Panc1 (cell line): ENCODE measurements at regions of chr10 and their contacts with region 1.

Region 1: DNA sequence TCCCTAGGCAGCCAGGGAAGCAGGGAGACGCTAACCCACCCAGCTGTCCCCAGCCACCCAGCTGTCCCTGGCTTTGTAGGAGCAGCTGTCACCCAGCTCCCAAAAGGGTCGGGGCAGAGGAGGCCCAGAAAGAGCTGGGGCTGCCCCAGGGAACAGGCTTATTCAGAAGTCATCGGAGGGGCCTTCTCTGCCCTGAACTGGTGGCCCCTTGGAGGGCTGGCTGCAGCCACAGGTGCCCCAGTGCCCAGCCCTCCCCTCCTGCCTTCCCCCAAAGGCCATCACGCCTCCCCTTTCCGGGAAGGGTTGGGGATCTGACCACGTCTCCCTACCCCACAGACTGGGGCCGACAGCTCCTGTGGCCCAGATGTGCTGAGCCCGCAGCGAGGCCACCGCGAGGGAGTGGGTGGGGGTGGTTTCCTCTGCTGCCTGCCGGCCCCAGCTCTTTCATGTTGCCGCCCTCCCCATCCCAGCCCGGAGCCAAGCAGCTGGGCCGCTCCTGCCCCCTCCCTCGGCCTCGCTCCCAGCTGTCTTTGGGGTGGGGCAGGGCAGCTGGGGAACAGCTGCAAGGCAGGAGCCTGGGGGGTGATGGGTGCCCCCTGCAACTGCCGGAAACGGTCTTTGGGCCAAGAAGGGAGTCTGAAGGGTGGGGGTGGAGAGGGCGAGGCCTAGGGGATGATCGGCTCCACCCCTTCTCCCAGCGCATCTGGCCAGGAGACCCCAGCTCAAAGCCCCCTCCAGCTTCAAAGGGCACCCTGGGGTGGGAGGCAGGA is 16.8 kb downstream of the TRIM8 start:
- DNase-seq: no peak
- ATAC-seq: peak; percentile 63
- H3K4me3 ChIP-seq: no peak overlapping the region
- H3K27ac ChIP-seq: no peak overlapping the region
- H3K4me1 ChIP-seq: peaks cover 16% of the 10 kb centered on the region
- H3K27me3 ChIP-seq: no peaks in the 10 kb centered on the region
- CTCF ChIP-seq: no peak

Region 2: DNA sequence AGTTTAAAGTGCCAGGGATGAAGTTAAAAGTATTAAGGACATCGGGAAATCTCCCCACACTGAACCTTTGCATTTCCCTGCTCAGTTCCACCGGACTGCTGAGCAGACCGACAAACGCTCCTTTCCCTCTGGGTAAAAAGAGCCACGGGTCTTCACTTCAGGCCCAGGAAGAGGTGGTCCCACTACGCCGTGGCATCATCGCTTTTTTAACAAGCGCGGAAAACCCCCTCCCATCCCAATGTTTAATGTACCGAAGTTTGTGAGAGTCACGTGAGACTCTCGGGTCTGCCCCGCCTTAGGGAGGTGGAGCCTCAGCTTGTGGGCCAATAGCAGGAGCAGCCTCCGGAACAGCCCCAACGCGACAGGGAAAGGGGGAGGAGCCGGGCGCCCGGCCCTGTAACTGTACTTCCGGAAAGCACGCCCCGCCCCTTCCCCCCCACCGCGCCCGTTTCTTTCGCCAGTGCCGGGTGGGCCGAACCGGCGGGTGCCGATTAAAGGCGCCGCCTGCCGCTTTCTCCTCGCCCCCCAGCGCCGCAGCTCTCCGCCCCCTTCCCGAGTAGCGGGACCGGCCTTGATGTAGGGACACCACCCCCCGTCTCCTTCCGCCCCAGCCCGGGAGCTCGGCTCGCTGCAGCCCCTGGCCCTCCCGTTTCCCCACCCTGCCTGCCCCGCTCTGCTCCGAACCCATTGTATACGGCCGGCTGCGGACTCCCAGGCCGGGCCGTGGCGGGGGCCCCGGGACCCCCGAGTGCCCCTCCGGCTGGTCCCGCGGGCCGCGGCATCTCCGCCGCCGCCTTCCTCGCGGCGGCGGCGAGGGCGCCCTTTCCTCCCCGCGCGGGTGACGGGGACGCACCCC is 19.0 kb before region 1 on chr10:
- CTCF ChIA-PET with region 1: interaction called, 4 read pairs
- POLR2A ChIA-PET with region 1: interaction called, 11 read pairs
- in situ Hi-C with region 1: no loop called
- intact Hi-C with region 1: no loop called
- DNase-seq: peak; percentile 87
- ATAC-seq: peak; percentile 79
- H3K4me3 ChIP-seq: peak overlapping the region; percentile 69 to 86
- H3K27ac ChIP-seq: peak overlapping the region; percentile 94
- H3K4me1 ChIP-seq: peaks cover 21% of the 10 kb centered on the region
- H3K27me3 ChIP-seq: no peaks in the 10 kb centered on the region
- CTCF ChIP-seq: no peak; the same call in 1 of the 2 replicates

Region 3: GRCh38 chr10:102713814-102714620 is 52.9 kb after region 1 on chr10 and contains the start of gene ARL3:
- CTCF ChIA-PET with region 1: no interaction called
- POLR2A ChIA-PET with region 1: interaction called, 13 read pairs
- in situ Hi-C with region 1: no loop called
- intact Hi-C with region 1: no loop called
- DNase-seq: peak; percentile 85
- ATAC-seq: peak; percentile 96
- H3K4me3 ChIP-seq: peak within 1 kb of the TSS; percentile 68 to 82
- H3K27ac ChIP-seq: peak within 1 kb of the TSS; percentile 93
- H3K4me1 ChIP-seq: peaks cover 37% of the 10 kb centered on the region
- H3K27me3 ChIP-seq: no peaks in the 10 kb centered on the region
- CTCF ChIP-seq: no peak; the same call in 1 of the 2 replicates
- total RNA-seq, gene ARL3: 20.7 TPM

Region 4: DNA sequence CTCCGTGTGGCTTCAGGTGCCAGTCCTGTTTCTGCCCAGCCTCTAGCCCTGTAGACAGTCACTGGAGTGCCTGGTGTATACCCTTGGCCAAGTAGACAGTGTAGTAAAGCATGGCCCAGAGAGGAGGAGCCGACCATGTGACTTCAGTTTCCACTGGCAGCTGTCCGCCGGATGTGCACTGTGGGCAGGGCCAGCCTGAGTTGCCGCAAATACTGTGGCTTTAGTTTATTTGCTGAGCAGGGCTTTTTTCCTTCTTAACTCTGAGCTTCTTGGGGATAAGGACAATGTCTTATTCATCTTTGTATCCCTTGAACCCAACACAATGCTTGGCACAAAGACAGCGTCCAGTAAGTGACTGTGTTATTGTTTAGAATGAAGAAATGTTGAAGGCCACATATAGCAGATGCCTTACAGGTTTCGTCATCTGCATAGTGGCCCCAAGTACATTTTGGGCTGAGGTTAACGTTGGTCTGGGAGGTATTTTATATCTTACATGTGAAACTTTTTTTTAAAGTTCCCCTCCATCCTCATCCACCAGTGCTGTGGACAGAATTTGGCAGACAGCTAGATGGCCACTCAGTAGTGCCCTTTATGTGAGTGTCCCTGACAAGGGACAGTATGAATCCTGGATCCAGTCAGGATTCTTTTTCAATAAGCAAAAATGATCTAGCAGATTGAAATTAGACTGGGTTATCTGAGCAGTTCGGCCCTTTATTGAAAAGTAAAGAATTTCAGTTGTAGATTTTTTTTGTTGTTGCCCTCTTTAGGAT is 135.5 kb after region 1 on chr10:
- CTCF ChIA-PET with region 1: no interaction called
- POLR2A ChIA-PET with region 1: no interaction called
- in situ Hi-C with region 1: no loop called
- intact Hi-C with region 1: no loop called
- DNase-seq: no peak
- ATAC-seq: peak; percentile 54
- H3K4me3 ChIP-seq: no peak overlapping the region
- H3K27ac ChIP-seq: peak overlapping the region; percentile 48
- H3K4me1 ChIP-seq: peaks cover 46% of the 10 kb centered on the region
- H3K27me3 ChIP-seq: no peaks in the 10 kb centered on the region
- CTCF ChIP-seq: no peak

Region 5: GRCh38 chr10:103278862-103279298 is 617.8 kb after region 1 on chr10:
- CTCF ChIA-PET with region 1: no interaction called
- POLR2A ChIA-PET with region 1: interaction called, 10 read pairs
- in situ Hi-C with region 1: no loop called
- intact Hi-C with region 1: no loop called
- DNase-seq: no peak
- ATAC-seq: no peak
- H3K4me3 ChIP-seq: no peak overlapping the region
- H3K27ac ChIP-seq: no peak overlapping the region
- H3K4me1 ChIP-seq: 0 out of 2 replicates have a peak, but pooled peaks cover 3% of the 10 kb centered on the region
- H3K27me3 ChIP-seq: peaks cover 10% of the 10 kb centered on the region
- CTCF ChIP-seq: no peak